Ovary (tissue), 10 donors: ENCODE measurements at regions of chr9 and their contacts with region 1.

Region 1: DNA sequence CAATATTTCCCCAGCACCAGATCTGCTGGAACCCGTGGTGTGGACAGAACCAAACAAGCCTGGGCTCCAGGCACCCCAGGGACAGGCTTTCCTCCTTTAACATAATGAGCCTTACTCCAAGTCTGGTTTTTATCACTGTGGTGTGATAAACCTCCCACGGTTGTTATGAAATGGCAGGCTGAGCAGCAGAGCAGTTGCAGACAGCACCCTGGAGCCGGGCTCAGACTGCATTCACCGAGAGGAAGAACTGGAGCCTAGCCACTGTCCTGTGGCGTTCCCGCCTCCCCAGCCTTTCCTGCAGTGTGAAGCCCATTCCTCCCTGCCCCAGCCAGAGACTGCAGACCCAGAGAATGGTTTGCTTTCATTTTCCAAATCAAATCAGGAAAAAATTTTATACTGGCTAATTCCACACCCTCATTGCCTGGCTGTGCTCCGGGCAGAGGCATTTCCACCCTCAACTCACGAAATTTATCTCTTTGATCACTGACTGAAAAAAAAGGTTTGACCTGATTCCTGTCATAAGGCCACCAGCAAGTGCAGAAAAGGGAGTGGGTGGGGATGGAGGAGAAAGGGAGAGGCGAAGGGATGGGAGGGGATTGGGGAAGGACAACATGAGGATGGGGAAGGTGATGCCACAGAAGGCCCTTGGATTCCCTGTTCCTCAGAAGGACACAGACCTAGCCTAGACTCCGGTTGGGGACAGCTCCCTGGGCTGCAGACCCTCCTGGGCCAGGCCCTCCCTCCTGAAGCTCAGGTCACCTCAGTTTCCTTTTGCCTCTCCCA is 18.9 kb downstream of the IPPK start:
- DNase-seq: peak; percentile 68 to 83 (median 76)
- H3K4me3 ChIP-seq: no peak overlapping the region
- H3K27ac ChIP-seq: peak overlapping the region in 1 of 2 donors; percentile 63
- H3K4me1 ChIP-seq: peaks cover 11% of the 10 kb centered on the region
- H3K27me3 ChIP-seq: no peaks in the 10 kb centered on the region
- CTCF ChIP-seq: no peak
- EP300 ChIP-seq: no peak
- POLR2A ChIP-seq: no peak

Region 2: DNA sequence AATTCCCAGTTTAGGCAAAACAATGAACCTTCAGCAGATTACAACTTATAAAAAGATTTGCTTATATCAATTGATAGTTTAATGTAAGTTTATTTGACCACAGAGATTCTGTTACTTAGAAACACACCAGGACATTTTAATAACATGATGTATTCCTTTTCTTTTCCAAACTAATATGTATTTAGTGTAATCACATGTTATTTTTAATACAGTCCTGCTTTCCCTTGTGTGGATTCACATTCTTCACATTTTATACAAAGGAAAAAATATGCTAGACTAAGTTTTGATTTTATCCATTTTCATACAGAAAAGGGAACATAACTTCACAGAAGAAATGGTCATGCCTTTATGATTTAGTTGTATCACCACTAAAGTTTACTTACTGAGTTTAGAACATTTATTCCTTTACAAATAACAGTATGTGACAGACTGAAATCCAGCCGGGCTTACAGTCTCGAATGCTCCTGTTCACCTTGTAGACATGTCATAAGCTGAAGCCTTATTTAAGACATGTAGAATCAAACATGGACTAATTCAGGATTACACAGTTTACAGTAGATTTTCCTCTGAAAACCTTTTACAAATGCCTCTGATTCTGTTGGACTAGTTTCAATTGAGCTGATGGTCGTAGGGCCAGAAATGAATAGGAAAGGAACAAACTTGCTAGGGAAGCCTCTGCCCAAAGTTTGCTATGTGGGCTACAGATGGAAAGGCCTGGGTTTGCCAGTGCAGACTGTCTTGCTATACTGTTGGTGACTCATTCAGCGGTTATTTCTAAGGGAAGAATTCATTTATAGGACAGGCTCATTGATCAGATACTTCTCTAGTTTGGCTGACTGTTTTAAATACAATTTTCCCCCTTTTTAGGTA is 162.1 kb before region 1 on chr9:
- intact Hi-C with region 1: no loop called
- DNase-seq: no peak
- H3K4me3 ChIP-seq: no peak overlapping the region
- H3K27ac ChIP-seq: peak overlapping the region in 1 of 2 donors; percentile 3
- H3K4me1 ChIP-seq: peaks cover 2% of the 10 kb centered on the region
- H3K27me3 ChIP-seq: no peaks in the 10 kb centered on the region
- CTCF ChIP-seq: no peak
- EP300 ChIP-seq: no peak
- POLR2A ChIP-seq: no peak

Region 3: DNA sequence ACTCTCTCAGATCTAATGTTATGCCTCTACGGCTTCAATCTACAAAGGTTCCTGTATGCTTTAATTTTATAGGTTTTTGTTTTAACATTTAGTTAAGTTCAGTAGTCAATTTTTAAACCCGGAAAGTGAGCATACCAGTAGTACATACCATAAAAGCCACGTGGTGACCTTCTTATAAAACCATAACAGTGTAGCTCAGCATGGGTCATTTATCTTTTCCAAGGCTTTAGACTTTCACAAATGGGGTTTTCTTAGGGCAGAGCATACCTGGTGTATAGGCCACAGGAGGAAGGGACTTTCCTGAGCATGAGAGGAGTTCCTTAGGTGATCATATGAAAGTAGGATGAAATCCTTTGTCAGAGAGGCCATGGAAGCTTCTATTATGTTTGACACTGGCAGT is 138.4 kb before region 1 on chr9:
- intact Hi-C with region 1: loop called in 1 of 4 experiments (anchors 10 kb)
- DNase-seq: no peak
- H3K4me3 ChIP-seq: no peak overlapping the region
- H3K27ac ChIP-seq: no peak overlapping the region
- H3K4me1 ChIP-seq: peaks cover 12% of the 10 kb centered on the region
- H3K27me3 ChIP-seq: no peaks in the 10 kb centered on the region
- CTCF ChIP-seq: no peak
- EP300 ChIP-seq: no peak
- POLR2A ChIP-seq: no peak